Activated naive CD8-positive, alpha-beta T cell treated with anti-CD3 and anti-CD28 coated beads, Interleukin-2, amount 10 ng/mL, durations not matched to agents 7 days and 5 days (primary cell): ENCODE measurements at regions of chr6 and their contacts with region 1.

Region 1: GRCh38 chr6:159833556-159833955 is 33.5 kb downstream of the PNLDC1 start:
- DNase-seq: no peak
- ATAC-seq: no peak
- H3K4me3 Mint-ChIP-seq: no peak overlapping the region
- H3K27ac Mint-ChIP-seq: peak overlapping the region; percentile 50
- H3K4me1 Mint-ChIP-seq: peaks cover 22% of the 10 kb centered on the region
- H3K27me3 Mint-ChIP-seq: peaks cover 6% of the 10 kb centered on the region

Region 2: DNA sequence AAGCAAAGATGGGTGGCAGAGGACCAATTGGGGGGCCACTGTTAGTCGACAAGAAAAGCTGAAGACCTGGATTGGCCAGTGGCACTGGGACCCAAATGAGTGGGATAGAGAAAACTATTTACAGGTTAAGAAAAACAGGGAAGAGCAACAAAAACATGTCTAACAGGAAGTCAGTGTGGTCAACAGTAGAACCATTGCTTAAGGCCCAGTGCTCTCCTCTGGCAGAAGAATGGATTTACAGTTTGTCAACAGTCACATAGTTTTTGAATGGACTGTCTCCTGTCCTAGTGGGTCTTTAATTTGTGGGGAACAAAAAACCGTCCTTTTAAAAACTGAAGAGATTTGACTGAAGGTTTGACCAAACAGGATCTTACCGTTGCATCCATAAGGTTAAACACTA is 118.4 kb before region 1 on chr6:
- POLR2A ChIA-PET with region 1: no interaction called
- DNase-seq: no peak
- ATAC-seq: no peak
- H3K4me3 Mint-ChIP-seq: no peak overlapping the region
- H3K27ac Mint-ChIP-seq: peak overlapping the region; percentile 21
- H3K4me1 Mint-ChIP-seq: peaks cover 2% of the 10 kb centered on the region
- H3K27me3 Mint-ChIP-seq: no peaks in the 10 kb centered on the region

Region 3: GRCh38 chr6:159819932-159820640 is 13.5 kb before region 1 on chr6:
- POLR2A ChIA-PET with region 1: interaction called, 11 read pairs
- DNase-seq: peak; percentile 54
- ATAC-seq: peak; percentile 86
- H3K4me3 Mint-ChIP-seq: peak overlapping the region; percentile 74
- H3K27ac Mint-ChIP-seq: peak overlapping the region; percentile 87
- H3K4me1 Mint-ChIP-seq: peaks cover 15% of the 10 kb centered on the region
- H3K27me3 Mint-ChIP-seq: no peaks in the 10 kb centered on the region